H1 (cell line): ENCODE measurements at regions of chr11 and their contacts with region 1.

Region 1: GRCh38 chr11:45872513-45873356 is 12.7 kb upstream of the MAPK8IP1 start:
- DNase-seq: peak; percentile 73 to 86
- H3K4me3 ChIP-seq: no peak overlapping the region
- H3K27ac ChIP-seq: no peak overlapping the region
- H3K4me1 ChIP-seq: peaks cover 9 to 16% (median 13%) of the 10 kb centered on the region in 4 experiments; a peak in 6 of 7 replicates
- H3K27me3 ChIP-seq: no peaks in the 10 kb centered on the region
- CTCF ChIP-seq: peak; percentile 92 to 98 (median 95)
- EP300 ChIP-seq: no peak
- POLR2A ChIP-seq: no peak
- RAD21 ChIP-seq: peak; percentile 96 to 97

Region 2: DNA sequence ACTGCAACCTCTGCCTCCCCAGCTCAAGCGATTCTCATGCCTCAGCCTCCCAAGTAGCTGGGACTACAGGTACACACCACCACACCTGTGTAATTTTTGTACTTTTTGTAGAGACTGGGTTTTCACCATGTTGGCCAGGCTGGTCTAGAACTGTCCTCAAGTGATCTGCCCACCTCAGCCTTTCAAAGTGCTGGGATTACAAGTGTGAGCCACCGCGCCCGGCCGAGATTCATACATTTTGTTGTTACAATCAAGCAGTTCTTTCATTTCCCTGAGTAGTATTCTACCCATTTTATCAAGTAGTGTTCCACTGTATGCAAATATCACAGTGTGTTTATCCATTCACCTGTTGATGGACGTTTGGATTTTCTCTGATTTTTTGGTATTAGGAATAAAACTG is 94.4 kb before region 1 on chr11:
- CTCF ChIA-PET with region 1: no interaction called
- POLR2A ChIA-PET with region 1: no interaction called
- DNase-seq: no peak
- H3K4me3 ChIP-seq: no peak overlapping the region
- H3K27ac ChIP-seq: no peak overlapping the region
- H3K4me1 ChIP-seq: no peaks in the 10 kb centered on the region
- H3K27me3 ChIP-seq: no peaks in the 10 kb centered on the region; a peak in 1 of 7 replicates
- CTCF ChIP-seq: no peak
- EP300 ChIP-seq: no peak
- POLR2A ChIP-seq: no peak
- RAD21 ChIP-seq: no peak

Region 3: DNA sequence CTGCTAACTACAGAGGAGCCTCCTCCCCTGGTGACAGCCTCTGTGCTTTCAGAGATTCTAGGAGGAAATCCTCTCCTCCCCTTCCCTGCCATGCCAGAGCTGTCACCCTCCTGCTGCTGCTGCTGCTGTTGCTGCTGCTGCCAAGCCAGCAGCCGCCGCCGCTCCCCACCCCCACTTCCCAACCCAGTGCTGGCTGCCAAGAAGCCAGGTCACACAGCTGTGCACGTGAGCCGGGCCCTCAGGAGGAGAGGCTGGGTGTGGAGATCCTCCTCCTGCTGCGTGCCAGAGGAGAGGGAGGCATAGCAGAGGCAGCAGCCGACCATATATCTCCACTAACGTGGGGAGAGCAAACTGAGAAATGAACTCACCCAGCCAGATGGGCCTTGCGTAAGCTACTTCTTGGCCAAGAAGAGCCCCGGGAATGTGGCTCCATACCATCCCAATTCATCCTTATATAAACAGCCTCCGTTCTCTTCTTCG is 13.0 kb before region 1 on chr11:
- CTCF ChIA-PET with region 1: interaction called, 90 read pairs
- POLR2A ChIA-PET with region 1: interaction called, 9 read pairs
- DNase-seq: no peak
- H3K4me3 ChIP-seq: no peak overlapping the region
- H3K27ac ChIP-seq: no peak overlapping the region
- H3K4me1 ChIP-seq: peaks cover 12 to 25% (median 16%) of the 10 kb centered on the region in 4 experiments; a peak in 6 of 7 replicates
- H3K27me3 ChIP-seq: no peaks in the 10 kb centered on the region
- CTCF ChIP-seq: no peak
- EP300 ChIP-seq: 0 out of 3 replicates have a peak, but pooled peaks of 1 of the 2 experiments have one; percentile 9
- POLR2A ChIP-seq: no peak
- RAD21 ChIP-seq: no peak

Region 4: DNA sequence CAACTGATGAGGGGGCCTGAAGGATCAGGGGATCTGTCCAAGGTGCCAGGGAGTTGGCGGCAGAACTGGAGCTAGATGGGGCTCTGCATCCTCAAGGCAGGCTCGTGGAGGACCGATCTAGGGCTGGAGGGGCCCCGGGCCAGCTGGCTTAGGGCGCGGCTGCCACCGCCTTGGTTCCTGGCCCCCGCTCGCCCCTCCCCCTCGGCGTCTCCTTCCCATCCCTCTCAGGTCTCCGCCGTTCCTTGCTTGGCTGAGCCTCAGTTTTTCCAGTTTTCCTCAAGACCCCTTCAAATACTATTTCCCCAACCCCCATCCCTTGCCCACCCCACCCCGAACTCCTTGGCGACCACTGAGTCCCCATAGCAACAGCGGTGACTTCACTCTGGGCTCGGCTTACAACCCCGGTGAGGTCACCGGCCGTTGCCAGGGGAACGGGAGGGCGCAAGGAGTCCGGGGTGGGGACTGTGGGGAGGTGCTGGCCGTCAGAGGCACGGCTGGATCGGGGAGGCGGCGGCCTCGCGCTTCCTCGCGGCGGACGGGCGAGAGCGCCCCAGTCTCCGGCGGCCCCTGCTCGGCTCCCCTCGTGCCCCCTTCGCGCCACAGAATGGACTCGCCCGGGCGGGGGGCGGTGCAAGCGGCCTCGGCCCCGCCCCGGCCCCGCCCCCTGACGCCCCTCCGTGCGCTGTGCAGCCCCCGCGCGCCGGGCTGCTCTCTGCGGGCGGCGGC is 26.9 kb after region 1 on chr11:
- CTCF ChIA-PET with region 1: interaction called, 69 read pairs
- POLR2A ChIA-PET with region 1: interaction called, 6 read pairs
- DNase-seq: peak; percentile 72 to 90
- H3K4me3 ChIP-seq: peak overlapping the region; percentile 50 to 66 (median 59); a peak in 7 of 8 replicates
- H3K27ac ChIP-seq: peak overlapping the region; percentile 81; the same call in 1 of the 2 replicates
- H3K4me1 ChIP-seq: peaks cover 0 to 28% (median 19%) of the 10 kb centered on the region in 4 experiments; a peak in 5 of 7 replicates
- H3K27me3 ChIP-seq: peaks cover 0 to 5% (median 2%) of the 10 kb centered on the region in 4 experiments; a peak in 1 of 7 replicates
- CTCF ChIP-seq: no peak
- EP300 ChIP-seq: peak in 1 of 2 experiments; percentile 98; a peak in 1 of 3 replicates
- POLR2A ChIP-seq: no peak
- RAD21 ChIP-seq: peak in 1 of 2 experiments; percentile 26; a peak in 2 of 4 replicates

Region 5: GRCh38 chr11:45924036-45924920 is 51.5 kb after region 1 on chr11:
- CTCF ChIA-PET with region 1: interaction called, 26 read pairs
- POLR2A ChIA-PET with region 1: interaction called, 8 read pairs
- DNase-seq: no peak
- H3K4me3 ChIP-seq: peak overlapping the region in 1 of 4 experiments; percentile 78; a peak in 3 of 8 replicates
- H3K27ac ChIP-seq: no peak overlapping the region
- H3K4me1 ChIP-seq: peaks cover 12 to 26% (median 18%) of the 10 kb centered on the region in 4 experiments
- H3K27me3 ChIP-seq: peaks cover 0 to 9% (median 0%) of the 10 kb centered on the region in 4 experiments; a peak in 3 of 7 replicates
- CTCF ChIP-seq: no peak
- EP300 ChIP-seq: no peak
- POLR2A ChIP-seq: no peak
- RAD21 ChIP-seq: no peak

Region 6: GRCh38 chr11:45982656-45983470 is 110.1 kb after region 1 on chr11:
- CTCF ChIA-PET with region 1: interaction called, 12 read pairs
- POLR2A ChIA-PET with region 1: interaction called, 3 read pairs
- DNase-seq: peak; percentile 60 to 84
- H3K4me3 ChIP-seq: peak overlapping the region in 1 of 4 experiments; percentile 40; a peak in 4 of 8 replicates
- H3K27ac ChIP-seq: peak overlapping the region; percentile 58; the same call in 1 of the 2 replicates
- H3K4me1 ChIP-seq: peaks cover 5 to 9% (median 9%) of the 10 kb centered on the region in 4 experiments; a peak in 5 of 7 replicates
- H3K27me3 ChIP-seq: no peaks in the 10 kb centered on the region
- CTCF ChIP-seq: no peak
- EP300 ChIP-seq: no peak
- POLR2A ChIP-seq: no peak
- RAD21 ChIP-seq: no peak